ENCODE measurements at regions of chr7 and their contacts with region 1.

Region 1: GRCh38 chr7:32108651-32109050 is 38.4 kb upstream of the PDE1C start:
- DNase-seq: peak; percentile 21 to 49
- ATAC-seq: peak; percentile 78 to 99 (median 96)
- H3K4me3 ChIP-seq: no peak overlapping the region
- H3K27ac ChIP-seq: peak overlapping the region in 6 of 10 donors; percentile 45 to 76 (median 65)
- H3K4me1 ChIP-seq: peaks cover 0 to 22% (median 4%) of the 10 kb centered on the region in 9 donors
- H3K27me3 ChIP-seq: no peaks in the 10 kb centered on the region
- CTCF ChIP-seq: no peak

Region 2: GRCh38 chr7:32147546-32148268 is 39.1 kb after region 1 on chr7:
- intact Hi-C with region 1: loop called in 5 of 10 experiments (anchors 2 to 10 kb)
- DNase-seq: no peak
- ATAC-seq: no peak
- H3K4me3 ChIP-seq: no peak overlapping the region
- H3K27ac ChIP-seq: peak overlapping the region in 1 of 10 donors; percentile 63
- H3K4me1 ChIP-seq: peaks cover 0 to 41% (median 11%) of the 10 kb centered on the region in 9 donors
- H3K27me3 ChIP-seq: no peaks in the 10 kb centered on the region
- CTCF ChIP-seq: no peak